ENCODE measurements at regions of chr11 and their contacts with region 1.

Region 1: GRCh38 chr11:250740-251299 is 14.0 kb downstream of the PSMD13 start:
- DNase-seq: peak; percentile 94
- H3K4me3 Mint-ChIP-seq: no peak overlapping the region
- H3K27ac Mint-ChIP-seq: peak overlapping the region; percentile 42
- H3K4me1 Mint-ChIP-seq: peaks cover 21% of the 10 kb centered on the region
- H3K27me3 Mint-ChIP-seq: no peaks in the 10 kb centered on the region

Region 2: GRCh38 chr11:236774-237767 is 13.7 kb before region 1 on chr11 and contains the start of gene PSMD13:
- intact Hi-C with region 1: loop called (anchors 2 kb)
- DNase-seq: peak; percentile 97
- H3K4me3 Mint-ChIP-seq: peak within 1 kb of the TSS; percentile 97
- H3K27ac Mint-ChIP-seq: peak within 1 kb of the TSS; percentile 100
- H3K4me1 Mint-ChIP-seq: peaks cover 46% of the 10 kb centered on the region
- H3K27me3 Mint-ChIP-seq: no peaks in the 10 kb centered on the region
- total RNA-seq, gene PSMD13: 272 and 275 TPM in 2 replicates

Region 3: DNA sequence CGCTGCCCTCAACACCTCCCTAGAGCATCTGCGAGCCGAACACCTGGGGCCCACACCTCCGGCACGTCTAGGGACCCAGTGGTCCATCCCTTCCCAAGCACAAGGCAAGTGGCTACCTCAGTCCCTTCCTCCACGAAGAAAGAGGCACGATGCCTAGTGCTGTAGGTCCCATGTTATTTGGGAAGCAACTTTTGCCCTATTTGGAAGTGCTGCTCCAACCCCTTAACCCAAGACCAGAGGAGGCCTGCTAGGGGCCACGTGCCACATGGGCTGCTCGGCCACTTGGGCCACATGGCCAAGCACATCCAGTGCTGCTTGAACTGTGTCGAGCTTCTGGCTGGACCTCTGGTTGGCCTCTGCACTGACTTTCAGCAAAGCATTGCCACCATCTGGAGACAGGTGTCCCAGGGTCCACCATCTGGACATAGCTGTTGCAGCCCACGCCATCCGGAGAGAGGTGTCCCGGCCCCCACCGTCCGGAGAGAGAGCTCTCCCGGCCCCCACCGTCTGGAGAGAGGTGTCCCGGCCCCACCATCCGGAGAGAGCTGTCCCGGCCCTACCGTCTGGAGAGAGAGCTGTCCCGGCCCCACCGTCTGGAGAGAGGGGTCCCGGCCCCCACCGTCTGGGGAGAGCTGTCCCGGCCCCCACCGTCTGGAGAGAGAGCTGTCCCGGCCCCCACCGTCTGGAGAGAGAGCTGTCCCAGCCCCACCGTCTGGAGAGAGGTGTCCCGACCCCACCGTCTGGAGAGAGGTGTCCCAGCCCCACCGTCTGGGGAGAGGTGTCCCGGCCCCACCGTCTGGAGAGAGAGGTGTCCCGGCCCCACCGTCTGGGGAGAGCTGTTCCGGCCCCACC is 112.0 kb after region 1 on chr11:
- intact Hi-C with region 1: loop called (anchors 1 kb)
- DNase-seq: no peak
- H3K4me3 Mint-ChIP-seq: no peak overlapping the region
- H3K27ac Mint-ChIP-seq: no peak overlapping the region
- H3K4me1 Mint-ChIP-seq: peaks cover 3% of the 10 kb centered on the region
- H3K27me3 Mint-ChIP-seq: peaks cover 26% of the 10 kb centered on the region